Endothelial cell of umbilical vein (primary cell): ENCODE measurements at regions of chr4 and their contacts with region 1.

Region 1: GRCh38 chr4:112082954-112083586 is 62.2 kb upstream of the FAM241A start:
- DNase-seq: peak; percentile 99
- H3K4me3 ChIP-seq: no peak overlapping the region
- H3K27ac ChIP-seq: peak overlapping the region; percentile 95
- H3K4me1 ChIP-seq: peaks cover 41% of the 10 kb centered on the region
- H3K27me3 ChIP-seq: no peaks in the 10 kb centered on the region
- CTCF ChIP-seq: no peak
- POLR2A ChIP-seq: peak; percentile 76

Region 2: DNA sequence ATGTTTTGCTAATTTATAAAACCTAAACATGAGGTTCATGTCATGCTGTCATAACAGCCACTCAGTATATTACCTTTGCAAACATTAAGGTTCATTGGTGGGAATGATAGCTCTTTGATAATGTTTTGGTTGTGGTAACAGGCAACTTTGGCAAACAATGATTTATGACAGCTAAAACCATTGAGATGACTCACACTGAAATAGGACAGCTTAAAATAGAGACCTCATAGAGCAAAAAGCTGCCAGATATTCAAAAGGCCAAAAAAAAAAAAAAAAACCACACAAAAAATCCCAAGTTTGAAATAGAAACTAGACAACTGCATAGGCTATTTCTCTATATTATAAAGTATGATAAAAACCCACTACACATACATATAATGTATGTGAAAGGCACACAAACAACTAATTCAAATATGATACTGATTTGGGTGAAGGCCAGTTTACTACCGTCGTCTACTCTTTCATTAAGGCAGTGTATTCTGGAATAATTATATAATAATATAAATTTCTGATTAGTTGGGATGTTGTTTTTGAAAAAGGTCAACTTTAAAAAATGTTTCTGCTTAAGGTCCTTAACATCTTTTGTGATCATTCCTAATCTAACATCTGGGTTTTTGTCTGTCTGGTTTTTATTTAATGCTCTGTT is 814.2 kb before region 1 on chr4:
- CTCF ChIA-PET with region 1: no interaction called
- POLR2A ChIA-PET with region 1: no interaction called
- dilution Hi-C with region 1: no loop called
- intact Hi-C with region 1: loop called (anchors 5 kb)
- DNase-seq: peak; percentile 50
- H3K4me3 ChIP-seq: no peak overlapping the region
- H3K27ac ChIP-seq: peak overlapping the region; percentile 25
- H3K4me1 ChIP-seq: peaks cover 25% of the 10 kb centered on the region
- H3K27me3 ChIP-seq: no peaks in the 10 kb centered on the region
- CTCF ChIP-seq: no peak
- POLR2A ChIP-seq: no peak

Region 3: DNA sequence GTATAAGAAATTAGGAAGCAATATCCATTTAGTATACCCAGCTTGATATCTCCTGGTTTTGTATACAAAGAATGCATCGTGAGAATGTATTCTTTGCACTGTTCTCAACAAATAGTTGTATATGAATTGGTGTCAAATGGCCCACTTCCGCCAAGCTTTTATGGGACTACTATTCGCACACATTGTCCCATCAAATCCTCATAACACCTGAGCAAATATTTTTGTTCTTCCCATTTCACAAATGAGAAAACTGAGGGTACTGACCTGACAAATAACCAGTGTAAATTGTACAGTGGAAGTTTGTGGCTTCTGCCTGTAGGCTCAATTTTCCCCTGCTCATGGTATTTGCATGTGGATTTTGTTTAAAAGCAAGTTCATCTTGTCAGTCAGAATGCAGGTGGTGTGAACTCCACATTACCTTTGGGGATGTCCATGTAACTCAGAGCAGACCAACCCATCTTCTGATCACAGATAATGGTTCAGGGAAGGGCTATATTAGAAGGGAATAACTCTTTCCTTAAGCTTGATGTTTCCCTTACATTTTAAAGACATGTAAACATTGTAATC is 10.6 kb after region 1 on chr4:
- CTCF ChIA-PET with region 1: interaction called, 20 read pairs
- POLR2A ChIA-PET with region 1: no interaction called
- dilution Hi-C with region 1: no loop called
- intact Hi-C with region 1: loop called (anchors 1 kb)
- DNase-seq: no peak
- H3K4me3 ChIP-seq: no peak overlapping the region
- H3K27ac ChIP-seq: no peak overlapping the region
- H3K4me1 ChIP-seq: no peaks in the 10 kb centered on the region
- H3K27me3 ChIP-seq: no peaks in the 10 kb centered on the region
- CTCF ChIP-seq: no peak
- POLR2A ChIP-seq: no peak

Region 4: DNA sequence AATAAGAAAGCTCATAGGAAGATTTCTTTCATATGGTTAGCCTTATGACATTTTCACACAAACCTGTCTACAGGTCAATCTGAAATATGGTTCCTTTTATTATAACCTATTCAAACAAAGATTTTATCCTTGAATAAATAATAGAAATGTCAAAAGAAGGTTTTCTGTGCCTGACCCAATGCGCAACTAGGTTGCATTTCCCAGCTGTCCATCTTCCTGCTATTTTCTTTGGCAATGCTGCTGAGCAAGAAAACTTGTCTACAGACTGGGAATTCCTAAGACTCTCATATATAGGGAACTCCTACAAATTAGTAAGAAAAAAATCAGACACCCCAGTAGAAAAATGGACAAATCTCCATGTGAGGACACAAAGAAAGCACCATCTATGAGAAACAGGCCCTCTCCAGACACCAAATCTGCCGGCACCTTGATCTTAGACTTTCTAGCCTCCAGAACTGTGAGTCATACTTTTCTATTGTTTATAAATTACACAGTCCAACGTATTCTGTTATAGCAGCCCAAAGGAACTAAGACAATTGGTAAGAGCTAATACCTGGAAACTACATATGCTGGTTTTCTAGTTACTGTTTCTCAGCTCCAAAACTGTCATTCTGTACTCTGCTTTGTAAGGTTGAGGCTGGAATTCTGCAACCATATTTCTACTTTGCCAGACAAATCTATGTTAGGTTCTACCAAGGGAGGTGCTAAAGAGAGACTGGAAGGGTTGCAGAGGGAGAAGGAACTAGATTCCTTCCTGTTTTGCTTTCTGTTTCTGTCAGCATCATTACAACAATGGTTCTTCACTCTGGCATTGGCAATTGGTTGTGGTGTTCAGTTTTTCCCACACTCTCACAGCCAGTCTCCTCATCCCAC is 26.4 kb after region 1 on chr4:
- CTCF ChIA-PET with region 1: no interaction called
- POLR2A ChIA-PET with region 1: no interaction called
- dilution Hi-C with region 1: no loop called
- intact Hi-C with region 1: loop called (anchors 1 kb)
- DNase-seq: peak; percentile 86
- H3K4me3 ChIP-seq: peak overlapping the region in 1 of 3 experiments; percentile 28
- H3K27ac ChIP-seq: peak overlapping the region; percentile 94
- H3K4me1 ChIP-seq: peaks cover 20% of the 10 kb centered on the region
- H3K27me3 ChIP-seq: no peaks in the 10 kb centered on the region
- CTCF ChIP-seq: no peak
- POLR2A ChIP-seq: peak; percentile 55

Region 5: GRCh38 chr4:112523764-112524505 is 440.9 kb after region 1 on chr4:
- CTCF ChIA-PET with region 1: no interaction called
- POLR2A ChIA-PET with region 1: no interaction called
- dilution Hi-C with region 1: no loop called
- intact Hi-C with region 1: loop called (anchors 5 kb)
- DNase-seq: no peak
- H3K4me3 ChIP-seq: peak overlapping the region; percentile 1 to 56 (median 18)
- H3K27ac ChIP-seq: no peak overlapping the region
- H3K4me1 ChIP-seq: peaks cover 10% of the 10 kb centered on the region
- H3K27me3 ChIP-seq: peaks cover 62 to 82% of the 10 kb centered on the region in 2 experiments
- CTCF ChIP-seq: peak; percentile 72 to 79
- POLR2A ChIP-seq: no peak

Region 6: GRCh38 chr4:113468165-113469022 is 1385.3 kb after region 1 on chr4:
- CTCF ChIA-PET with region 1: no interaction called
- POLR2A ChIA-PET with region 1: no interaction called
- dilution Hi-C with region 1: no loop called
- intact Hi-C with region 1: loop called (anchors 2 kb)
- DNase-seq: peak; percentile 100
- H3K4me3 ChIP-seq: peak overlapping the region in 1 of 3 experiments; percentile 7
- H3K27ac ChIP-seq: peak overlapping the region; percentile 96
- H3K4me1 ChIP-seq: peaks cover 31% of the 10 kb centered on the region
- H3K27me3 ChIP-seq: no peaks in the 10 kb centered on the region
- CTCF ChIP-seq: no peak
- POLR2A ChIP-seq: peak; percentile 40